Activated CD4-positive, alpha-beta memory T cell treated with anti-CD3 and anti-CD28 coated beads, Interleukin-2, amount 10 ng/mL, durations not matched to agents 7 days and 5 days (primary cell): ENCODE measurements at regions of chr12 and their contacts with region 1.

Region 1: DNA sequence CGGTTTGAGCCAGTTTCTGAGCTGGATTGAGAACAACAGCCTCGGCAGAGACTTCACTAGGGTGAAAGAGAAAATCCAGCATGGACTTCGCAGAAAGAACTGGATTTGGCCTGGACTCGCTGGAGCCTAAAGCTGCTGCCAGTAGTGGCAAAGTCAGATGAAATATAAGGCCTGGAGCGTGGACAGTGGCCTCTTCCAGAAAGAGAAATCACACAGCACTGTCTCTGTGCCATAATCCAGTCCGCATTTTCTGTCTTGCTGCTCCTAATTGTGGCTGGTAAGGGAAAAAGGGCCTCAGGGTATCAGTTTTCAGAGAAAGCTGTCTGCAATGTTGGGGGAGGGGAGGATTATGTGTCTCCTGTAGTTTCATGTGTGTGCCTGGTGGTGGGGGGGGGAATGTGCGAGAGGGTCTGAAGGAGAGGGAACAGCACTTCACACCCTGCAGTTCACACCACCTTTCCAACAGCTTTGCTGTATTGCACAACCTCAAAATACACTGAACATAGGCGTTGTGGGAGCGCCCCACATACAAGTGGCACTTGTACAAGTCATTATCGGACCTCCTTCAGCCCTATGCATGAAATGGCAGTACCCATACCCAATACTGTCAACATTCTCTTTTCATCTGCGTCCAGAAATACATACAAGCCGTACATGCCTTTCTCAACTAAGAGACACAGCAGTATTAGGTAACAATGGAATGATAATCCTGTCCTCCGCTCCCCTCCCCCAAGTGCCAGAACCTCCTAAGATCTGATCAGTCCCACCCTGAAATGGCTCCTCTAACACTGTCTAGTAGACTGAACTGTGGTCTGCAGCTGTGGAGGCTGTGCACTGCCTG is 107.5 kb upstream of the ATF7IP start:
- DNase-seq: peak; percentile 95
- H3K4me3 Mint-ChIP-seq: peak overlapping the region; percentile 55
- H3K27ac Mint-ChIP-seq: peak overlapping the region; percentile 100
- H3K4me1 Mint-ChIP-seq: peaks cover 51% of the 10 kb centered on the region
- H3K27me3 Mint-ChIP-seq: no peaks in the 10 kb centered on the region

Region 2: DNA sequence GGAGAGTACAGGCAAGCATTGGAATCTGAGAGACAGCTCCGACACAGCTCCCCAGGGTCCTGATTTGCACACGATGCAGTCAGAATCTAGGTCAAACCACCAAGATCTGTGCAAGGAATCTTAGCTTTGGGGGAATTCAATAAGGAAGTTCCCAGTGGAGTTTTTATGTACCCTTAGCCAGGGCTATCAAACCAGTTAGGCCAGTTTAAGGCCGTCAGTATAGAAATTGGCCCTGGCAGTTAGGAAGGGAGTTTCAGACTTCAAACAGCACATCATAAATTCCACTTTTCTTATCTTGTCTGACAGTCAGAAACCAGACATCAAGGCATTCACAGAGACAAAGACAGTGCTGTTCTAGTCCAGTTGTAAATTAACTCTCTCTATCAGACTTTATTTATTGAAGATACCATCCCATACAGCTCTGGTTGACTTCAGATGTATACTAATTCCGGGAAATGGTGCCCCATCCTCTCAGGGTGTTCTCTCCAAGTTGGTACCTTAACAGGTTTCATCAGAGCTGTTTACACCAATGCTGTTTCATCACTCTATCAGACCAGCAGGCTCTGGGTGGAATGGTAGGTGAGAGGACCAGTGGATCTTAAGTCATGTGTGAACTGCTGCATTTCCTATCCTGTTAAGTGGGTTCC is 49.9 kb before region 1 on chr12:
- CTCF ChIA-PET with region 1: no interaction called
- POLR2A ChIA-PET with region 1: no interaction called
- DNase-seq: no peak
- H3K4me3 Mint-ChIP-seq: no peak overlapping the region
- H3K27ac Mint-ChIP-seq: no peak overlapping the region
- H3K4me1 Mint-ChIP-seq: no peaks in the 10 kb centered on the region
- H3K27me3 Mint-ChIP-seq: no peaks in the 10 kb centered on the region

Region 3: DNA sequence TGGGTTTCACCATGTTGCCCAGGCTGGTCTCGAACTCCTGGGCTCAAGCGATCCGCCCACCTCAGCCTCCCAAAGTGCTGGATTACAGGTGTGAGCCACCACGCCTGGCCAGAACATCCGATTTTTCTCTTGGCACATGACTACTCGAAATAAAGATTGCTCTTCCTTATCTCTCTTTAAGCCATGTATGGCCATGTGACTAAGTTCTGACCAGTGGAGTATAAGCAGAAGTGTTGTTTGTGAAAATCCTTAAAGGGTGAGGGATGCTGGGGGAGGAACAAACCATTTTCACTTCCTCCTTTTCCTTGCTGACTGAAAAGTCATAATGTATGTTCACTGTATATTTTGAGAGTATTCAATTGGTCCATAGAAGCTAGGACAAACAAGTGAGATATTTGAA is 56.8 kb after region 1 on chr12:
- CTCF ChIA-PET with region 1: no interaction called
- POLR2A ChIA-PET with region 1: no interaction called
- DNase-seq: no peak
- H3K4me3 Mint-ChIP-seq: no peak overlapping the region
- H3K27ac Mint-ChIP-seq: no peak overlapping the region
- H3K4me1 Mint-ChIP-seq: no peaks in the 10 kb centered on the region
- H3K27me3 Mint-ChIP-seq: no peaks in the 10 kb centered on the region

Region 4: GRCh38 chr12:14454098-14454907 is 196.3 kb after region 1 on chr12:
- CTCF ChIA-PET with region 1: interaction called, 10 read pairs
- POLR2A ChIA-PET with region 1: interaction called, 11 read pairs
- DNase-seq: peak; percentile 44
- H3K4me3 Mint-ChIP-seq: peak overlapping the region; percentile 27
- H3K27ac Mint-ChIP-seq: peak overlapping the region; percentile 67
- H3K4me1 Mint-ChIP-seq: peaks cover 41% of the 10 kb centered on the region
- H3K27me3 Mint-ChIP-seq: no peaks in the 10 kb centered on the region